ENCODE measurements at regions of chr16 and their contacts with region 1.

Region 1: GRCh38 chr16:75794426-75794825 is 68.1 kb upstream of the CPHXL start:
- DNase-seq: no peak
- H3K4me3 ChIP-seq: no peak overlapping the region
- H3K27ac ChIP-seq: no peak overlapping the region
- H3K4me1 ChIP-seq: no peaks in the 10 kb centered on the region
- H3K27me3 ChIP-seq: no peaks in the 10 kb centered on the region
- CTCF ChIP-seq: no peak
- POLR2A ChIP-seq: no peak

Region 2: DNA sequence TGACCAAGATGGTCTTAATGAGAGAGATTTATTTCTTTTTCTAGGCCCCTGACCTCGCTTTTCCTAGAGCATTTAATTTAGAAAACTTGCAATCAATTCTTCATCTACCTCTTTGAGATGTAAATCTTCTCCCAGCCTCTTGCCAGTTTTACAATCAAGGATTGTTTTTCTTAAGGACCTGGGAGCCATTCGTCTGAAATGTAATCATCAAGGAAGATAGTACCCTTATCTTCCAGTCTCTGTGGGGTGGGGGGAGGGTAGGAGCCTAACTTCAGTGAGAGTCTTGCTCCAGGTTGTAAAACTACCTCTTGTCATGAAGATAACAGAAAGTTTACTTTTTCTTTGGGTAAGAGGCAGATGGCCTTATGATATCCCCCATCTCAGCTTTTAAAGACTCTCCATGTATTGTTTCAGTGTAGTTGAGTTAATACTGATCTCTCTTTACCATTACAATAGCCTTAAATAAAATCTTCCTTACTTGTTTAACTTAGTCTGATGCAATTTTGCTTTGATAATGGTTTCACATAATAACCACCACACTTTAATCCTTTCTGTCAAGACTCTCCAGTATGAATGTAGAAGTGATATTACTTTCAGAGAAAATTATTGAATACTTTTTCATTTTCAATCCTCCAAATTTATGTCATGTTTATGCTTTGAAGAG is 42.1 kb after region 1 on chr16:
- intact Hi-C with region 1: no loop called
- DNase-seq: no peak
- H3K4me3 ChIP-seq: no peak overlapping the region
- H3K27ac ChIP-seq: no peak overlapping the region
- H3K4me1 ChIP-seq: no peaks in the 10 kb centered on the region
- H3K27me3 ChIP-seq: no peaks in the 10 kb centered on the region
- CTCF ChIP-seq: no peak
- POLR2A ChIP-seq: no peak

Region 3: GRCh38 chr16:75899163-75899562 is 104.7 kb after region 1 on chr16:
- intact Hi-C with region 1: no loop called
- DNase-seq: no peak
- H3K4me3 ChIP-seq: no peak overlapping the region
- H3K27ac ChIP-seq: no peak overlapping the region
- H3K4me1 ChIP-seq: no peaks in the 10 kb centered on the region
- H3K27me3 ChIP-seq: no peaks in the 10 kb centered on the region
- CTCF ChIP-seq: no peak
- POLR2A ChIP-seq: no peak

Region 4: GRCh38 chr16:77171745-77172635 is 1377.6 kb after region 1 on chr16:
- intact Hi-C with region 1: loop called (anchors 5 kb)
- DNase-seq: no peak
- H3K4me3 ChIP-seq: no peak overlapping the region
- H3K27ac ChIP-seq: no peak overlapping the region
- H3K4me1 ChIP-seq: no peaks in the 10 kb centered on the region
- H3K27me3 ChIP-seq: no peaks in the 10 kb centered on the region
- CTCF ChIP-seq: peak; percentile 33 to 75 (median 64)
- POLR2A ChIP-seq: no peak

Measured in thyroid gland (tissue), 4 donors.